Activated CD8-positive, alpha-beta memory T cell treated with anti-CD3 and anti-CD28 coated beads, Interleukin-2, amount 10 ng/mL, durations not matched to agents 7 days and 5 days (primary cell): ENCODE measurements at regions of chr2 and their contacts with region 1.

Region 1: GRCh38 chr2:238263204-238264071 is 23.6 kb upstream of the HES6 start:
- DNase-seq: peak; percentile 83
- ATAC-seq: peak; percentile 80
- H3K4me3 Mint-ChIP-seq: no peak overlapping the region
- H3K27ac Mint-ChIP-seq: peak overlapping the region; percentile 12
- H3K4me1 Mint-ChIP-seq: peaks cover 5% of the 10 kb centered on the region
- H3K27me3 Mint-ChIP-seq: no peaks in the 10 kb centered on the region

Region 2: DNA sequence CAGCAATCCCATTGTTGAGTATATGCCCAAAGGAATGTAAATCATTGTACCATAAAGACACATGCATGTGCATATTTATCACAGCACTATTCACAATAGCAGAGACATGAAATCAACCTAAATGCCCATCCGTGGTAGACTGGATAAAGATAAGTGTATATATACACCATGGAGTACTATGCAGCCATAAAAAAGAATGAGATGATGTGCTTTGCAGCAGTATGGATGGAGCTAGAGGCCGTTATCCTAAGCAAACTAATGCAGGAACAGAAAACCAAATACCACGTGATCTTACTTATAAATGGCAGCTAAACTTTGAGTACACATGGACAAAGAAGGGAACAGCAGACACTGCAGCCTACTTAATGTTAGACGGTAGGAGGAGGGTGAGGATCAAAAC is 422.4 kb before region 1 on chr2:
- CTCF ChIA-PET with region 1: no interaction called
- DNase-seq: no peak
- ATAC-seq: no peak
- H3K4me3 Mint-ChIP-seq: no peak overlapping the region
- H3K27ac Mint-ChIP-seq: no peak overlapping the region
- H3K4me1 Mint-ChIP-seq: no peaks in the 10 kb centered on the region
- H3K27me3 Mint-ChIP-seq: peaks cover 18% of the 10 kb centered on the region

Region 3: GRCh38 chr2:237858294-237859081 is 404.9 kb before region 1 on chr2:
- CTCF ChIA-PET with region 1: interaction called, 12 read pairs
- DNase-seq: peak; percentile 61
- ATAC-seq: peak; percentile 77
- H3K4me3 Mint-ChIP-seq: no peak overlapping the region
- H3K27ac Mint-ChIP-seq: no peak overlapping the region
- H3K4me1 Mint-ChIP-seq: peaks cover 7% of the 10 kb centered on the region
- H3K27me3 Mint-ChIP-seq: peaks cover 64% of the 10 kb centered on the region

Region 4: GRCh38 chr2:238158527-238159070 is 104.8 kb before region 1 on chr2 and contains the start of gene ERFE:
- CTCF ChIA-PET with region 1: interaction called, 31 read pairs
- DNase-seq: no peak
- ATAC-seq: peak; percentile 74
- H3K4me3 Mint-ChIP-seq: peak within 1 kb of the TSS; percentile 39
- H3K27ac Mint-ChIP-seq: no peak within 1 kb of the TSS
- H3K4me1 Mint-ChIP-seq: peaks cover 4% of the 10 kb centered on the region
- H3K27me3 Mint-ChIP-seq: peaks cover 45% of the 10 kb centered on the region
- total RNA-seq, gene ERFE: not detected

Region 5: DNA sequence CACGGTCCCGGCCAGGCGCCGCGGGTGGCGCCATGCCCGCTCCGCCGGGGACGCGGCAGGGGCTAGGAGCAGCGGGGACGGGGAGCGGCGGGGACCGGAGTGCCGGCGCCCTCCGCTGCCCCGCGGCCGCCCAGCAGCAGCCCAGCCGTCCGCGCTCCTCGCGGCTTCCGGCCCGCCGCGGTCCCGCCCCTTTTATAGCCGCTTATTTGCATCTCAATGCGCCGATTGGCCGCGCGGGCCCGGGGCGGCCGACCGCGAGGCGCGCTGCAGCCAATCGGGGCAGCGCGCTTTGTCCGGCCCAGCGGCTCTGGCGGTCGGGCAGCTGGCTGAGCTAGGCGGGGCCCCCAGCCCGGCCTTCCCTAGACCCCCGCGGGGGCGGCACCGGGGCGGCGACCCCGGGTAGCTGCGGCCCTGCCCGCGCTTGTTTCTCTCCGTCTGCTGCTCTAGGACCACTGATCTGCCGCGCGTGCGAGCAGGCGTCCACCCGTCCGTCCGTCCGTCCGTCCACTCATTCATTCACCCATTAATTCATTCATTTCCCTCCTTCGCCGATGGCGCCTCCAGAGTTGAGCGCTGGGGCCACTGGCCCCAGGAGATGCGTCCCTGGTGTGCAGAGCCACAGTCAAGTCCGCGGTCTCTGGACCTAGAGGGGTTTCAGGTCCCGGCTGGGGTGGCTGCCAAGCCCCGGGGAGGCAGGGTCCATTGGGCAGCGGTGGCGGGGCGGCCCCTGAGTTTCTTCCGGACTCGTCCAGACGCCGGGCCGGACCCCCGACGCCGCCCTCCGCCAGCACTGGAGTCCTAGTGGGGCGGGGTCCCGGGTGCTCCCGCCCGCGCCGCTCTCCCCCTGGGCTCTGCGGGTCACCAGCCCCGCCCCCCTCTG is 23.3 kb before region 1 on chr2 and contains the start of gene HES6:
- CTCF ChIA-PET with region 1: interaction called, 26 read pairs
- DNase-seq: peak; percentile 85
- ATAC-seq: peak; percentile 92
- H3K4me3 Mint-ChIP-seq: peak within 1 kb of the TSS; percentile 83
- H3K27ac Mint-ChIP-seq: no peak within 1 kb of the TSS
- H3K4me1 Mint-ChIP-seq: peaks cover 2% of the 10 kb centered on the region
- H3K27me3 Mint-ChIP-seq: peaks cover 51% of the 10 kb centered on the region
- total RNA-seq, gene HES6: 3.0 to 4.0 TPM

Region 6: DNA sequence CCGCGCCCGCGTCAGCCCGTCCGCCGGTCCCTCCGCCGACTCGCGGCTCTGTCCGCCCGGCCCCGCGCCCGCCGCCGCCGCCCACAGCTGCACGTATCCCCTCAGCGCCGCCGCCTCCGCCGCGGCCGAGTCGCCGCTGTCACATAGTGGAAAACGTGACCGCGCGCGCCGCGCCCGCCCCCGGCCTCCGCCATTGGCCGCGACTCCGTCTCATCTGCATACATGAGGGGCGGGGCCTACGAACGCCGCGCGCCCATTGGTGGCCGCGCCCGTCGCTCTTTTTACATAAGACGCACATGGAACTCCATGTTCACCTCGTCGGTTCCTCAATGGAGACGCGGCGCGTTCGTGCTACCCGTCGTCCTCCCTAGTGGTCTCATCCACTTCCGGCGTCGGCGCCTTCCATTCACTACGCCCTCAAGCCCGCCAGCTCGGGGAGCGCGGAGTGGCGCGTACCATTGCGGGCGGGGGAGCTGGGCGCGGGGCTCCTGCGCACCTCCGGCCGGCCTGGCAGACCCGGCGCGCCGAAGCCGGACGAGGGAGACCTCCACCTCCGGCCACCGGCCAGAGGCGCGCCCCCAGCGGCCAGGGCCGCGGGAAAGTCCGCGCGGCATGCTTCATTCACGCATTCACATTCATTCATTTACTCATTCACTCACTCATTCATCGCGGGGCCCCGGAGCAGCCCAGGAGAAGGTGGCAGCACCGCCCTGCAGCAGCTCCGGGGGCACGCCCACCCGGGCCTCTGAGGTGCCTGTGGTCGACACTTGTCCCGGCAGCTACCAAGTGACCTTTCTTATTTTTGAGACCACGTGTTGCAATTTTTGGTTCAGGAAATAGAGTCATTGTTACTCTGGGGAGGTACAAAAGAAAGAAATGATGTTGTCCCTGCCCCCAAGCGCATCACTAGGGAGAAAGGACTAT is 25.5 kb after region 1 on chr2:
- CTCF ChIA-PET with region 1: interaction called, 31 read pairs
- DNase-seq: peak; percentile 98
- ATAC-seq: peak; percentile 91
- H3K4me3 Mint-ChIP-seq: peak overlapping the region; percentile 84
- H3K27ac Mint-ChIP-seq: peak overlapping the region; percentile 96
- H3K4me1 Mint-ChIP-seq: peaks cover 25% of the 10 kb centered on the region
- H3K27me3 Mint-ChIP-seq: no peaks in the 10 kb centered on the region